Aorta (tissue), 5 donors: ENCODE measurements at regions of chr15 and their contacts with region 1.

Region 1: DNA sequence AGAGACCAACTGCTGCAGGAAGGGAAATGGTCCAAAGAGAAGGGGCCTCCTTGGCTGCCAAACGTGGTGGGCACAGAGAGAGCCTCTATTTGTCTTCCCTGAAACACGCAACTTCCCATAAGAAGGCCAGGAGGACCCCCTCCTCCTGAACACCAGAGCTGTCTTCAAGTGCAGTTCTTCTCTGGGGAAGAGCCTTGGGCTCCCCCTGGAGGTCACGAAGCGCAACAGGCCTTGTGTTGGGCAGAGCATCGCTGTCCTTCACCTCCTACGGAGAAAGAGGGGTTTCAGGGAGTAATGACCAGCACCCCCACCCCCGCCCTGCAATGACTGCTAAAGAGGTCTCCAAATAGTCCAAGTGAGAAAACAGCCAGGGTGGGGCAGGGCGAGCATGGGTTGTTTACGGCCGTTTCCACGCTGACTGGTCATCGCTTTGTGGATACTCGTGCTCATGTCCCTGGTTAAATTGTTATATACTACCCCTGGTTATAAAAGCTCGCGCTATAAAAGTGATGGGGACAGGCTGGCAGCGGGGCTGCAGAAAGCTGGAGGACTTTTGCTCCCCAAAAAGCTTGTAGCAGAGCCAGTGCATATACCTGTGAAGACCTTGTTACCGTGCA is 397.5 kb upstream of the ATP10A start:
- DNase-seq: no peak
- ATAC-seq: peak; percentile 70
- H3K4me3 ChIP-seq: no peak overlapping the region
- H3K27ac ChIP-seq: no peak overlapping the region
- H3K4me1 ChIP-seq: no peaks in the 10 kb centered on the region
- H3K27me3 ChIP-seq: peaks cover 0 to 2% of the 10 kb centered on the region in 2 donors

Region 2: GRCh38 chr15:26037369-26037768 is 223.3 kb before region 1 on chr15:
- intact Hi-C with region 1: loop called (anchors 5 to 10 kb)
- DNase-seq: no peak
- ATAC-seq: no peak
- H3K4me3 ChIP-seq: no peak overlapping the region
- H3K27ac ChIP-seq: no peak overlapping the region
- H3K4me1 ChIP-seq: no peaks in the 10 kb centered on the region
- H3K27me3 ChIP-seq: no peaks in the 10 kb centered on the region

Region 3: DNA sequence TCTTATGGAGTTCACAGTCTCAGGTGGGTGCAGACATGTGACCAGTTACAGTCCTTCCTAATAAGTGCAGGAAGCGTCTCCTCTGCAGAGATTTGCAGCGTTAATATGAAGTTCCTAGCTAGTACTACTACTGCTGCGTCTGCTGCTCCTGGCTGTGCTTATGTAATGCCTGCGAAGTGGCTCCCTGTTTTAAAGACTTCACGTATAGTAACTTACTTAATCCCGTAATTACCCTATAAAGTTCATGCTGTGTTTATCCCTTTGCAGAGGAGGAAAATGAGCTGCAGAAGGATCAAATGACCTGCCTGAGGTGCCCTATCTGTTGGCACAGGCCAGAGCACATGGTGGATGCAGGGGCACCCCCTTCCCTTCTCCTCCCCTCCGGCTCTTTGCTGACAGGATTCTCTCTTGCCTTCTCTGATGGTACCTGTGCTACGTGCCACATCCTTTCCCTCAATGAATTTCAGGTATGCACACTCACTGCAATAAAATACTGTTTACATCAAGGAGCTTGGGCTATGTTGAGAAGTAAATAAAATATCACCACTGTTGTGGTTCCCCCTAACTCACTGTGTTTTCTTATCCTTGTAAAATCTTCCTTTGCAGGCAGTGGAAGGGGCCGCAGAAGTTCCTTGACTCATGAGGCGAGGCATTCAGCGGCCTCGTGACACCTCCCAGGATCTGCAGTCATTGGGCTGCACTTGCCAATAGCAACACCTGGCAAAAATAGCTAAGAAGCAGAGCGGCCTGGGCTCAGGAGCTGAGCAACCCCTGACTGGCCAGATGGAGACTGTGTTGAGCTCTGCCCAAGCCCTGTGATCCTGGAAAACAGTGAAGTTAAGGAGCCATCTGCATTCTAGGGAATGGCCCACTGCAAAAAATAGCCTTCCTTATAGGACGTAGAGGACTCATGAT is 208.6 kb before region 1 on chr15:
- intact Hi-C with region 1: loop called in 1 of 2 experiments (anchors 10 kb)
- DNase-seq: peak; percentile 87 to 89
- ATAC-seq: peak; percentile 91
- H3K4me3 ChIP-seq: peak overlapping the region in 1 of 2 donors; percentile 4
- H3K27ac ChIP-seq: peak overlapping the region in 1 of 2 donors; percentile 37
- H3K4me1 ChIP-seq: no peaks in the 10 kb centered on the region
- H3K27me3 ChIP-seq: no peaks in the 10 kb centered on the region